ENCODE measurements at regions of chr10 and their contacts with region 1.

Region 1: GRCh38 chr10:88835096-88835909 is 16.3 kb downstream of the ANKRD22 start:
- DNase-seq: peak; percentile 89
- H3K4me3 Mint-ChIP-seq: no peak overlapping the region
- H3K27ac Mint-ChIP-seq: no peak overlapping the region
- H3K4me1 Mint-ChIP-seq: no peaks in the 10 kb centered on the region
- H3K27me3 Mint-ChIP-seq: no peaks in the 10 kb centered on the region
- CTCF ChIP-seq: peak; percentile 78

Region 2: GRCh38 chr10:88565072-88565471 is 270.2 kb before region 1 on chr10:
- CTCF ChIA-PET with region 1: interaction called, 20 read pairs
- POLR2A ChIA-PET with region 1: interaction called, 3 read pairs
- intact Hi-C with region 1: no loop called
- DNase-seq: peak; percentile 35
- H3K4me3 Mint-ChIP-seq: no peak overlapping the region
- H3K27ac Mint-ChIP-seq: no peak overlapping the region
- H3K4me1 Mint-ChIP-seq: no peaks in the 10 kb centered on the region
- H3K27me3 Mint-ChIP-seq: peaks cover 17% of the 10 kb centered on the region
- CTCF ChIP-seq: peak; percentile 48

Region 3: DNA sequence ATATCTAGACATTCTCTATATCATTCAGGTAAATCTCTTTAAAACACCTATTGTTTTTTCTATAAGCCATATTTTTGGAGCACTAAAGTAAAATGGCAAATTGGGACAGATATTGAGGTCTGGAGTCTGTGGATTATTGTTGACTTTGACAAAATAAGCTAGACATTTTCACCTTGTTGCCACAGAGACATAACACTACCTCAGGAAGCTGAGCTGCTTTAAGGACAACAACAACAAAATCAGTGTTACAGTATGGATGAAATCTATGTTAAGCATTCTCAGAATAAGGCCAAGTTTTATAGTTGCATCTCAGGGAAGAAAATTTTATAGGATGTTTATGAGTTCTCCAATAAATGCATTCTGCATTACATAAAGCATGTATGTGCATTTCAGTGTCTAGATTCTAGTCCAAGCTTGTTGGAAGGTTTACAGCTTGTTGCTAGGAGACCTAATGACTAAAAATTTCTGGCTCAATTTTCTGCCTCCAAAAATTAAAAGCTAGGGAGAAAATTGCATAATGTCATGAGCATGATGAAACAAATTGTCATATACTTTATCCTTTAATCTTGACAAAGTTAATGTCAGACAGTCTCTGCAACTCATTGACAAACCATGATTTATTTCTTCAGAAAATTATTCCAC is 14.4 kb before region 1 on chr10:
- CTCF ChIA-PET with region 1: interaction called, 66 read pairs
- POLR2A ChIA-PET with region 1: interaction called, 5 read pairs
- intact Hi-C with region 1: no loop called
- DNase-seq: peak; percentile 85
- H3K4me3 Mint-ChIP-seq: no peak overlapping the region
- H3K27ac Mint-ChIP-seq: peak overlapping the region; percentile 96
- H3K4me1 Mint-ChIP-seq: peaks cover 17% of the 10 kb centered on the region
- H3K27me3 Mint-ChIP-seq: no peaks in the 10 kb centered on the region
- CTCF ChIP-seq: no peak

Region 4: GRCh38 chr10:88865281-88865876 is 30.1 kb after region 1 on chr10:
- CTCF ChIA-PET with region 1: interaction called, 69 read pairs
- POLR2A ChIA-PET with region 1: interaction called, 4 read pairs
- intact Hi-C with region 1: loop called (anchors 1 kb)
- DNase-seq: peak; percentile 53
- H3K4me3 Mint-ChIP-seq: no peak overlapping the region
- H3K27ac Mint-ChIP-seq: no peak overlapping the region
- H3K4me1 Mint-ChIP-seq: peaks cover 4% of the 10 kb centered on the region
- H3K27me3 Mint-ChIP-seq: no peaks in the 10 kb centered on the region
- CTCF ChIP-seq: peak; percentile 25

Region 5: DNA sequence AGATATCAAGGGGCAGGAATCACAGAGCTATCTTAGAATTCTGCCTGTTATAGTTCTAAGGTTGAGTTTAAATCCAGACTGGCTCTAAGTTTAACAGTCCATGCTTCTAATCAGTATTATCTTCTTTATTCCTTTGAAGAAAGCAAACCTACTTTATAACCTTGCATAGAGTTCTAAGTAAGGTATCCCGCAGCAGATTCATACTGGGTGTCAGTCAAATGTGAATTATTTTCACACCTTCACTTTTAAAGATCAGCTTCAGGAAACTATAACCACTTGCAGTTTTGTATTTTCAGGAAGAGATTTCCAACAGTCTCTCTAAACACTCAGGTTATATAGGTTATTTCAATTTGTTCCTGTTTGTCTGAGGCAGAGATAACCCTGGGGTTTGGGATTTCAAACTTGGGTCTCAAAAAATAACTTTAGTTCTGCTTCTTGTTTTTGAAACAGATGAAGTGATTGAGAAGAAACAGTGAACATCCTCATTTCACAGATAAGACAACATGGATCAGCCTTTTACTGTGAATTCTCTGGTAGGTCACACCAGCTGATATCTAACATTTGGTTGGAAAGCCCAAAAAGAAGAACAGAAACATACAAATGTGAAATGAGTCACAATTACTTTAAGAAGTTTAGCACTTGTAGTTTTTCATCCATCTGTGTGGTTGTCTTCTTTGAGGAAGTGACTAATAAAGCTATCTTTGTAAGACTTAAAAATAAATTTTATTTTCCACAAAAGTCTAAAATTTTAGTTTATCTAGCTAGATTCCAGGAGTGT is 66.1 kb after region 1 on chr10:
- CTCF ChIA-PET with region 1: interaction called, 13 read pairs
- POLR2A ChIA-PET with region 1: no interaction called
- intact Hi-C with region 1: no loop called
- DNase-seq: no peak
- H3K4me3 Mint-ChIP-seq: no peak overlapping the region
- H3K27ac Mint-ChIP-seq: peak overlapping the region; percentile 27
- H3K4me1 Mint-ChIP-seq: peaks cover 11% of the 10 kb centered on the region
- H3K27me3 Mint-ChIP-seq: no peaks in the 10 kb centered on the region
- CTCF ChIP-seq: no peak

Region 6: DNA sequence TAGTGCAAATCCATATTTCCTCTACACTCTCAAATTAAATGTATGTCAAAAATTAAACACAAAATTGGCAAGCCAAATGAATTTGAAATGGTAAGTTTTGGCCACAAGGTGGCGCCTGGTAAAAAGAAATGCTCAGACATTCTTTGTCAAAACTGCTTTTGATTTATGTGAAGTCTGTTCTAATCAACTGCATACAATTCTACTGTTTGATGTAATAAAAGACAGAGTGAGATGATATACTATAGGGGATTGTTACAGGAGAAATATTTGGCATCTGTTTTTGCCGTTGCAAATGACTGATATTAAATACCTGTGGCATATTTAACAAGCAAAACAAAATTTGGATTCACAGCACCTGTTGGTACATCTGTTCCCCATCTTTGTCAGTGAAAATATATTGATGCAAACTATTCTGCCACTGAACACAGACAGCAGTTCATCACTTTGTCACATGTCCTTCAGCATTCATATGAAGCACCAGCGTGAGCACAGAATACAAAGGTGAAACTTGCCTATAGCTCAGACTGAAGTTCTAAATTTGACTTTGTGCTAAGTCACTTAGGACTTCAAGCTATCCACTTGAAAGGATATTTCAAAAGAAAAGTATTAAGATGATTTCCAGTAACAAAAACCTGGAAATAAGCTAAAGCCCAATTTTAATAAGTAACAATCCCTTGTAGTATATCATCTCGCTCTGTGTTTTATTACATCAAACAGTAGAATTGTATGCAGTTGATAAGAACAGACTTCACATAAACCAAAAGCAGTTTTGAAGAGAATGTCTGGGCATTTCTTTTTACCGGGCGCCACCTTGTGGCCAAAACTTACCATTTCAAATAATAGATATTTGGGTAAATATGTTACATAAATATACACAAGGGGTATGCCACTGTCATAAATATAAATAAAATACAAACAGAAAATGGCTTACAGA is 382.0 kb after region 1 on chr10:
- CTCF ChIA-PET with region 1: interaction called, 12 read pairs
- POLR2A ChIA-PET with region 1: no interaction called
- intact Hi-C with region 1: loop called (anchors 2 kb)
- DNase-seq: peak; percentile 73
- H3K4me3 Mint-ChIP-seq: no peak overlapping the region
- H3K27ac Mint-ChIP-seq: no peak overlapping the region
- H3K4me1 Mint-ChIP-seq: peaks cover 7% of the 10 kb centered on the region
- H3K27me3 Mint-ChIP-seq: no peaks in the 10 kb centered on the region
- CTCF ChIP-seq: peak; percentile 55